Right ventricle myocardium superior (tissue), 1 donor: ENCODE measurements at regions of chr7 and their contacts with region 1.

Region 1: GRCh38 chr7:116929914-116930913 is 23.1 kb upstream of the ST7 start:
- DNase-seq: peak; percentile 90
- ATAC-seq: peak; percentile 95

Region 2: DNA sequence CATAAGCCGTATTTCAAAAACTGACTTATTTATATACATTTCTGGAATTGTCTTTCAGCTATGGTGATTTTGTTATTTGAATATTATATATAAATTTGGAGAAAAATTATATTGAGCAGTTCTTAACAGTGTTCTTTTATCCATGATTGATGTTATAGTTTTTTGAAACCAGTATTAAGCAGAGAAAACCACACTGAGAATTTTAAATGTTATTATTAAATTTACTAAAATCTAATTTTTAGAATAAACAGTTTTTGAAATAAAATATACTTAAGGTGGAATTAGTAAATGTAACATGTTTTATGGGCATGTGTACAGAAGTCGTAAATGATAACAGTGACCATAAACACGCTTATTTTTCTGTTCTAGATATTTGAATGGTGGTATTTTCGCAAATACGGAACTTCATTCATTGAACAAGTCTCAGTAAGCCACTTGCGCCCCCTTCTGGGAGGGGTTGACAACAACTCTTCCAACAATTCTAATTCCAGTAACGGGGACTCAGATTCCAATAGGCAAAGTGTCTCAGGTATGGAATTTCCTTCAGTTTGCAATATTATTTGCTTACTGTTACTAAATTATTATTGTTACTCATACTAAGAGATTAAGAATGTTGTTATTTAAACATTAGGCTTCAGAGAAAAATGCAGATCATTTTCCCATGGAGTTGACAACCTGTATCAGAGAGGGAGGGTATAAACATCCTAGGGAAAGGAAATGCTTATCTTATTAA is 189.1 kb after region 1 on chr7:
- intact Hi-C with region 1: loop called (anchors 5 kb)
- DNase-seq: peak; percentile 84
- ATAC-seq: peak; percentile 66